ENCODE measurements at regions of chr16 and their contacts with region 1.

Region 1: DNA sequence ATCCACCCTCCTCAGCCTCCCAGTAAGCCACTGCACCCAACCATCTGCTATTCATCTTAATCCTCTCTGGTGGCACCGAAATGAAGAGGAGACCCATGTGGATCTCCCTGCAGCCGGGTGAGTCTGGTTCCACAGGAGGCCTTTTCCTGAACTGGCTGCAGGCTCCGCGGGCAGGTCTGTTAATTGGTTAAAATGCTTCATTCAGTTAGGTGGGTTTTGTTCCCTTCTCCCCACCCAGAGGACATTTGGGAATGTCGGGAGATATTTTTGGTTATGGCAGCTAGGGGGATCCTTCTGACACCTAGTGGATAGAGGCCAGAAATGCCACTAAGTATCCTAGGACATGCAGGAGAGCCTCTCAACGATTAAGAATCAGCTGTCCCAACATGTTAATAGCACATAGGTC is 16.7 kb downstream of the C16orf54 start:
- DNase-seq: no peak
- ATAC-seq: no peak
- H3K4me3 ChIP-seq: no peak overlapping the region
- H3K27ac ChIP-seq: no peak overlapping the region
- H3K4me1 ChIP-seq: peaks cover 17% of the 10 kb centered on the region
- H3K27me3 ChIP-seq: no peaks in the 10 kb centered on the region
- CTCF ChIP-seq: peak; percentile 44 to 56 (median 54); a peak in 5 of 6 replicates
- EP300 ChIP-seq: no peak
- POLR2A ChIP-seq: no peak
- RAD21 ChIP-seq: peak; percentile 36

Region 2: DNA sequence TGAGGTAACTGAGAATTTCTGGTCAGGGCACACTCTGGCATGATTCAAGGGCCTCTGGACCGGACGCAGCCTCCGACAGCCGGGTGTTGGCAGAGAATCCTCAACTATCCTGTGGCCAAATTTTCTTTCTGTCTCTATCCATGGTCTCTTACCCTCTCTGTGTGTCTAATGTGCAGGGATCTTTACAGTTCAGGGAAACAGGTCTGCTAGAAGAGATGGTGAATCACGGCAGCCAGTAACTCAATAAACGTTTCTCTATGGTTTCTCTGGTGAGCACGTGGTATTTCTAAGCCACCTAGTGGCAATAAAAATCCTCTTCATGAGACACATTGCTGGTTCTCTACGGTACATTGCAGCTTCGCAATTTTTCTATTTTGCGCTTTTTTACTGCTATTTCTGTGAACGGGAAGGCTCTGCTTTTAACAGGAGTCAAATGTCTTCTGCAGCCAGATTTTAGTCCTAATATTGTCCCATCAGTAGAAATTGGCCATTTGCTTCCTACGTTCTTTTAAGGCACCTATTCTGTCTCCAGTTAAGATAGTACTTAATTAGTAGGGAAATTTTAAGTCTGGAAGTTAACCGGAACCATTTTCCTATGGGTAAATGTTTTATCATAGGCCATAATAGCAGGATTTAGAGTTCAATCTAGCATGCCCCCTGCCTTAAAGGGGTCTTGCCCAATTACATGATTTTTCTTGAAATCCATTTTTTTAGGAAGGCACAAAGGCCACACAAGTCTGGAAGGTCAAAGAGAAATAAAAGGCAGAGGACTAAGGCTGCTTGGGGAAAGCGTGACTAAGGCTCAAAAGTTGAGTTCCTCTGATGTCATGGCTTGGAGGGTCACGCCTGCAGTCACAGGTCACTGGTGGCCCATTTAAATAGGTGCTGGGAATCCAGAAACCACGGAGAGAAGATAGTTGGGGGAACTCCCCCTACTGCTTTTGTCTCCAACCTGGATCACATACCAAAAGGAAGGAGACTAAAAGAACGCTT is 18.6 kb before region 1 on chr16:
- CTCF ChIA-PET with region 1: interaction called, 12 read pairs
- POLR2A ChIA-PET with region 1: interaction called, 3 read pairs
- RAD21 ChIA-PET with region 1: interaction called, 4 read pairs
- SMC1A ChIA-PET with region 1: interaction called, 11 read pairs
- in situ Hi-C with region 1: no loop called
- intact Hi-C with region 1: no loop called
- DNase-seq: no peak
- ATAC-seq: peak; percentile 94
- H3K4me3 ChIP-seq: no peak overlapping the region
- H3K27ac ChIP-seq: no peak overlapping the region
- H3K4me1 ChIP-seq: peaks cover 9% of the 10 kb centered on the region
- H3K27me3 ChIP-seq: no peaks in the 10 kb centered on the region; a peak in 1 of 4 replicates
- CTCF ChIP-seq: peak; percentile 52 to 75 (median 58); a peak in 5 of 6 replicates
- EP300 ChIP-seq: no peak
- POLR2A ChIP-seq: no peak
- RAD21 ChIP-seq: peak; percentile 53

Region 3: DNA sequence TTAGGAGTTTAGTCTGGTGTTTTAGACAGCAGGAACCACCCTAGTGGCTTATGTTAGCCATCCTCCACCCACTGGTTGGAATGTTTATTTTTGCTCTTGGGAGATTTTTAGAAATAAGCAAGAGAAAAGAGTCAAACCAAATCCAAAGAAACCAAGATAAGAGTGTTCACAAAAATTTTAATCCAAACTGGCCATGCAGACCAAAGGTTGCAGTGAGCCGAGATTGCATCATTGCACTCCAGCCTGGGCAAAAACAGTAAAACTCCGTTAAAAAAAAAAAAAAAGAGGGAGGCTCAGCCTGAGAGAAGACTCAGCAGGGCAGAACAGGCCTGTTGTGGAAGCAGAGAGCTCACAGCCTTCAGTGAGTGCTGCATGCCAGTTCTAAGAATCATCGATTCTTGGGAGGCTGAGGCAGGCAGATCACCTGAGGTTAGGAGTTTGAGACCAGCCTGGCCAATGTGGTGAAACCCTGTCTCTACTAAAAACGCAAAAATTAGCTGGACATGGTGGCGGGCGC is 28.9 kb after region 1 on chr16:
- CTCF ChIA-PET with region 1: interaction called, 9 read pairs
- POLR2A ChIA-PET with region 1: interaction called, 8 read pairs
- RAD21 ChIA-PET with region 1: interaction called, 7 read pairs
- SMC1A ChIA-PET with region 1: interaction called, 19 read pairs
- in situ Hi-C with region 1: no loop called
- intact Hi-C with region 1: no loop called
- DNase-seq: no peak
- ATAC-seq: no peak
- H3K4me3 ChIP-seq: no peak overlapping the region
- H3K27ac ChIP-seq: no peak overlapping the region
- H3K4me1 ChIP-seq: peaks cover 17% of the 10 kb centered on the region
- H3K27me3 ChIP-seq: no peaks in the 10 kb centered on the region
- CTCF ChIP-seq: no peak
- EP300 ChIP-seq: no peak
- POLR2A ChIP-seq: no peak
- RAD21 ChIP-seq: no peak

Region 4: GRCh38 chr16:29790183-29790952 is 61.2 kb after region 1 on chr16 and contains the start of gene KIF22:
- CTCF ChIA-PET with region 1: interaction called, 32 read pairs
- POLR2A ChIA-PET with region 1: interaction called, 6 read pairs
- RAD21 ChIA-PET with region 1: interaction called, 8 read pairs
- SMC1A ChIA-PET with region 1: interaction called, 5 read pairs
- in situ Hi-C with region 1: no loop called
- intact Hi-C with region 1: no loop called
- DNase-seq: peak; percentile 97
- ATAC-seq: peak; percentile 98
- H3K4me3 ChIP-seq: peak within 1 kb of the TSS; percentile 93
- H3K27ac ChIP-seq: peak within 1 kb of the TSS; percentile 95
- H3K4me1 ChIP-seq: peaks cover 9% of the 10 kb centered on the region; the same call in 1 of the 2 replicates
- H3K27me3 ChIP-seq: no peaks in the 10 kb centered on the region
- CTCF ChIP-seq: peak; percentile 79 to 92 (median 89)
- EP300 ChIP-seq: no peak
- POLR2A ChIP-seq: peak; percentile 97
- RAD21 ChIP-seq: peak; percentile 61
- polyA plus RNA-seq, gene KIF22: 7.6 to 16.9 TPM

Measured in GM12878 (cell line).